RWPE1 (cell line): ENCODE measurements at regions of chr15 and their contacts with region 1.

Region 1: GRCh38 chr15:90648137-90649070 is 68.7 kb upstream of the BLM start:
- DNase-seq: peak; percentile 74
- H3K27ac ChIP-seq: no peak overlapping the region; the same call in 1 of the 2 replicates
- CTCF ChIP-seq: peak; percentile 95

Region 2: DNA sequence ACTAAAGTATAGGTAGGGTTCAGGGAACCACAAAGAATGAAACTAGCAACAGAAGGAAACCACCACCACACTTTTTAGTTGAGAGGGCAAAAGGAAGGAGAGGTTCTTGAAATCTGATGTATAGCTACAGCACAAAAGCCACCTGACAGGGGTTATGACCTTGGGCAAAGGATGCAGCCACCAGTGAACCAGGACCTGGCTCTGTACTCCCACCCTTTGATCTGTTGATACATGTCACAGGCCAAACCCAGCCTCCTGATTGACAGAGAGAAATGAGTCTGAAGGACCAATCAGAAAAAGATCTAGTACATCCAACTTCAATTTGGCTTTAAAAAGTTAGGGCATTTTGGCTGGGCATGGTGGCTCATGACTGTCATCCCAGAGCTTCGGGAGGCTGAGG is 48.8 kb after region 1 on chr15:
- CTCF ChIA-PET with region 1: interaction called, 10 read pairs
- POLR2A ChIA-PET with region 1: no interaction called
- DNase-seq: no peak
- H3K27ac ChIP-seq: no peak overlapping the region
- CTCF ChIP-seq: no peak